ENCODE measurements at regions of chr12 and their contacts with region 1.

Region 1: DNA sequence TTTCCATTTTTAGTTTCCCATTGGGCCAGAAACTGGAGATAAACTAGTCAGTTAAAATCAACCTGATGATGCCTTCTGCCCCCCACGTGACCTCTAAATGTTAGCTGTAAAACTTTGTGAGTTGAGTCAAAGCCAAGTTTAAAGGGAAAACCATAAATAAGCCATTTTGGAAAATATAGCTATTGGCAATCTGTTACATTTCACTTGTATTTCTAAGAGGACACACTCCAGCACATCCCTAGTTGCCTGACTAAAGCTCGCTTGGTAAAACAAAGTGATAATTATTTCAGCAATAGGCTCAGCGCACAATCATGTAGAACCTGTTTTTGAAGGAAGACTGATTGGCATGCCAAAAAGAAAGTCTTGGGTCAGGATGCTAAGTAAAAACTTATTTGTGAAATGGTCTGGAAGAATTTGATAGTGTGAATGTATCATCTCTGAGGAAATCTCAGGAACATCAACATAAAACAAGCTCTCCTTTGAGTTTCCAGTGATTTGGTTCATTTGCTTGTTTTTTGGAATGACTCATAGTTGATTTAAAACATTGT is 49.2 kb upstream of the AEBP2 start:
- DNase-seq: no peak
- H3K4me3 ChIP-seq: no peak overlapping the region
- H3K27ac ChIP-seq: no peak overlapping the region
- H3K27me3 ChIP-seq: no peaks in the 10 kb centered on the region
- CTCF ChIP-seq: no peak

Region 2: GRCh38 chr12:19198272-19198671 is 191.9 kb before region 1 on chr12:
- CTCF ChIA-PET with region 1: no interaction called
- POLR2A ChIA-PET with region 1: no interaction called
- DNase-seq: no peak
- H3K4me3 ChIP-seq: no peak overlapping the region
- H3K27ac ChIP-seq: no peak overlapping the region
- H3K27me3 ChIP-seq: no peaks in the 10 kb centered on the region
- CTCF ChIP-seq: no peak

Region 3: GRCh38 chr12:19518209-19518608 is 128.1 kb after region 1 on chr12:
- CTCF ChIA-PET with region 1: no interaction called
- POLR2A ChIA-PET with region 1: interaction called, 11 read pairs
- DNase-seq: no peak
- H3K4me3 ChIP-seq: no peak overlapping the region
- H3K27ac ChIP-seq: no peak overlapping the region
- H3K27me3 ChIP-seq: no peaks in the 10 kb centered on the region
- CTCF ChIP-seq: no peak

Region 4: GRCh38 chr12:19819231-19819630 is 429.1 kb after region 1 on chr12:
- CTCF ChIA-PET with region 1: no interaction called
- POLR2A ChIA-PET with region 1: no interaction called
- DNase-seq: no peak
- H3K4me3 ChIP-seq: no peak overlapping the region
- H3K27ac ChIP-seq: no peak overlapping the region
- H3K27me3 ChIP-seq: no peaks in the 10 kb centered on the region
- CTCF ChIP-seq: no peak